Naive thymus-derived CD4-positive, alpha-beta T cell (primary cell): ENCODE measurements at regions of chr2 and their contacts with region 1.

Region 1: GRCh38 chr2:233331536-233331935 is 22.8 kb upstream of the DGKD start:
- DNase-seq: peak; percentile 45 to 89 (median 83)
- ATAC-seq: peak; percentile 96
- H3K4me3 ChIP-seq: peak overlapping the region; percentile 17
- H3K4me3 Mint-ChIP-seq: peak overlapping the region; percentile 65 to 82 (median 73)
- H3K27ac ChIP-seq: peak overlapping the region; percentile 75
- H3K27ac Mint-ChIP-seq: peak overlapping the region; percentile 94 to 99 (median 98)
- H3K4me1 ChIP-seq: peaks cover 46 to 58% of the 10 kb centered on the region in 2 donors
- H3K4me1 Mint-ChIP-seq: peaks cover 33 to 64% (median 51%) of the 10 kb centered on the region in 7 donors
- H3K27me3 ChIP-seq: no peaks in the 10 kb centered on the region
- H3K27me3 Mint-ChIP-seq: peaks cover 0 to 2% (median 0%) of the 10 kb centered on the region in 5 donors

Region 2: DNA sequence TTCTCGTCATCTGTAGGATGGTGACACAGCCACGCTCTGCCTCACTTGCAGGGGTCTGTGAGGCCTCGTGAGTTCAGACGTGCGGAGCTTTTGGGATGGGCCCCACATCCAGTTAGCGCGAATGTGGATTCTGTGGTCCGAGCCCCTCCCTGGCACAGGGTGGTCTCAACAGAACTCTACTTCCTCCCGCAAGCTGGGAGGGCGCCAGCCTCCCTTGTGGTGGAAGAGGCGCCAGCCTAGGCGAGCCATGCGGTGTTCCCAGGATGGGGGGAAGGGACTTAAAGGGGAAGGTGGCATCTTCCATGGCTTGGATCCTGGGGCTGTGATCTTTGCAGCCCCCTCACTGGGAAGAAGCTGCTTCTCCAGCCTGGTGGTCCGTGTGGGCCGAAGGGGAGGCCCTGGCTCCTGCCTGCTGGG is 460.1 kb before region 1 on chr2:
- CTCF ChIA-PET with region 1: no interaction called
- POLR2A ChIA-PET with region 1: no interaction called
- intact Hi-C with region 1: no loop called
- DNase-seq: peak in 1 of 9 donors; percentile 15
- ATAC-seq: no peak
- H3K4me3 ChIP-seq: no peak overlapping the region
- H3K4me3 Mint-ChIP-seq: no peak overlapping the region
- H3K27ac ChIP-seq: no peak overlapping the region
- H3K27ac Mint-ChIP-seq: no peak overlapping the region
- H3K4me1 ChIP-seq: no peaks in the 10 kb centered on the region
- H3K4me1 Mint-ChIP-seq: peaks cover 0 to 10% (median 5%) of the 10 kb centered on the region in 7 donors
- H3K27me3 ChIP-seq: no peaks in the 10 kb centered on the region
- H3K27me3 Mint-ChIP-seq: peaks cover 8 to 19% (median 13%) of the 10 kb centered on the region in 5 donors

Region 3: DNA sequence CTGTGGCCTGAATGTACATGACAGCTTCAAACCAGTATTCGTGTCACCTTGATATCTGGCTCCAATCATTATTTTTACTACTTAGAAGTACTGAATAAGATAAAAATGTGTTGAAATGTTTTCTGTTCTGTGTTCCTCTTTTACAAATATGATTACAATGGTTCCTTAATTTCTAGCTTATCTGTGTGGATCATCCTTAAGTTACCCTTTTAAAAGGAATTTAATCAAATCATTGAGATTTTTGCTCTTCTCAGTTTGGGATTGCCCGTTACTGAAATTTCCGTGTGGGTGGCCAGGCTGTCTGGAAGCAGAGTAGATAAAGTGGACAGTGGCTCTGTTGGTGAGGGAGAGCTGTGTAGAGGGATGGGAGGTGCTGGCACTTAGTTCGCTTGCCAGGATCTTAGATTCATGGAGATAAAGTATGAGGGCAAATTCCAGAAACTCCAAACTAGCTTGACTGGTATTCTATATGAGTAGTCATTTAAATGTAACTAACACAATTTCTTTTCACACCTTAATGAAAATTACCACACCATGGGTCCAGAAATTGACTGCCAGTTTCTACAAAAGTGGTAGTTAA is 51.3 kb before region 1 on chr2:
- CTCF ChIA-PET with region 1: interaction called, 3 read pairs
- POLR2A ChIA-PET with region 1: interaction called, 13 read pairs
- intact Hi-C with region 1: loop called in 1 of 2 experiments (anchors 5 kb)
- DNase-seq: no peak
- ATAC-seq: no peak
- H3K4me3 ChIP-seq: no peak overlapping the region
- H3K4me3 Mint-ChIP-seq: no peak overlapping the region
- H3K27ac ChIP-seq: no peak overlapping the region
- H3K27ac Mint-ChIP-seq: peak overlapping the region in 8 of 9 donors; percentile 20 to 76 (median 70)
- H3K4me1 ChIP-seq: peaks cover 11 to 15% of the 10 kb centered on the region in 2 donors
- H3K4me1 Mint-ChIP-seq: peaks cover 9 to 45% (median 34%) of the 10 kb centered on the region in 7 donors
- H3K27me3 ChIP-seq: no peaks in the 10 kb centered on the region
- H3K27me3 Mint-ChIP-seq: no peaks in the 10 kb centered on the region

Region 4: GRCh38 chr2:233288719-233289118 is 42.8 kb before region 1 on chr2:
- CTCF ChIA-PET with region 1: interaction called, 3 read pairs
- POLR2A ChIA-PET with region 1: interaction called, 4 read pairs
- intact Hi-C with region 1: loop called in 1 of 2 experiments (anchors 5 kb)
- DNase-seq: no peak
- ATAC-seq: no peak
- H3K4me3 ChIP-seq: no peak overlapping the region
- H3K4me3 Mint-ChIP-seq: no peak overlapping the region
- H3K27ac ChIP-seq: peak overlapping the region; percentile 39
- H3K27ac Mint-ChIP-seq: peak overlapping the region in 8 of 9 donors; percentile 23 to 82 (median 69)
- H3K4me1 ChIP-seq: no peaks in the 10 kb centered on the region
- H3K4me1 Mint-ChIP-seq: peaks cover 0 to 22% (median 9%) of the 10 kb centered on the region in 7 donors
- H3K27me3 ChIP-seq: no peaks in the 10 kb centered on the region
- H3K27me3 Mint-ChIP-seq: no peaks in the 10 kb centered on the region

Region 5: GRCh38 chr2:233343171-233343705 is 11.7 kb after region 1 on chr2:
- CTCF ChIA-PET with region 1: interaction called, 3 read pairs
- POLR2A ChIA-PET with region 1: interaction called, 11 read pairs
- intact Hi-C with region 1: no loop called
- DNase-seq: no peak
- ATAC-seq: no peak
- H3K4me3 ChIP-seq: no peak overlapping the region
- H3K4me3 Mint-ChIP-seq: no peak overlapping the region
- H3K27ac ChIP-seq: no peak overlapping the region
- H3K27ac Mint-ChIP-seq: no peak overlapping the region
- H3K4me1 ChIP-seq: no peaks in the 10 kb centered on the region
- H3K4me1 Mint-ChIP-seq: peaks cover 5 to 17% (median 11%) of the 10 kb centered on the region in 7 donors
- H3K27me3 ChIP-seq: no peaks in the 10 kb centered on the region
- H3K27me3 Mint-ChIP-seq: peaks cover 0 to 11% (median 0%) of the 10 kb centered on the region in 5 donors

Region 6: DNA sequence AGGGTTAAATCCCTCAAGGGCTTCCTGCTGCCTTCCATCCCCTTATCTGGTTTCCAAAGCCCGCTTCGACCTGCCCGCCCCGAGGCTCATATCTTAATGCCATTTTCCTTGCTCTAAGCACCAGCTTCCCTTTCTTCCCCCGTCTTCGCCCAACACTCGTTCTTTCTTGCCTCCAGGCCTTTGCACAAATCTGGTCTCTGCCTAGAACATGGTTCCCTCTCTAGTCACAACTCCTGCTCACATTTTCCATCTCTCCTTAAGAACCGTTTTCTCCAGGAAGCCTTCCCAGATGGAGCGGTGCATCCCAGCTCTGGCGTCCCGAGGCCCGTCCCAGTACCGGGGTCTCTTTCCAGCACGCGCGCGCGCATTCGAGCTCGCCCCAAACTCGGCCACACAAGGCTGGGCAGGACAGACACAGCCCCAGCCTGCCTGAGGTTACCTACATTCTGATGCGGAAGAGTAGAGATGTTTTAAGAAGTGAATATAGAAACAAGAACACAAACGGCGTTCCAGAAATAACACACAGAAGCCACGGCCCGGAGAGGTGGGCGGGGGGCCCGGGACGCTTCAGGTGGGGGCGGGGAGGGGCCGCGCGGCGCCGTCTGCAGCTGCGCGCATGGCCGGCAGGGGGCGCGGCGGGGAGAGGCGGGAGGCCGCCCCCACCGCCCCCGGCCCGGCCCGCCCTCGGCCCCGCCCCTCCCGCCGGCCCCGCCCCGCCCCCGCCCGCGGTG is 22.4 kb after region 1 on chr2 and contains the start of gene DGKD:
- CTCF ChIA-PET with region 1: interaction called, 4 read pairs
- POLR2A ChIA-PET with region 1: interaction called, 13 read pairs
- intact Hi-C with region 1: loop called (anchors 1 kb)
- DNase-seq: peak; percentile 42 to 81 (median 69)
- ATAC-seq: peak; percentile 96
- H3K4me3 ChIP-seq: peak within 1 kb of the TSS; percentile 83
- H3K4me3 Mint-ChIP-seq: peak within 1 kb of the TSS; percentile 92 to 98 (median 94)
- H3K27ac ChIP-seq: peak within 1 kb of the TSS; percentile 72
- H3K27ac Mint-ChIP-seq: peak within 1 kb of the TSS; percentile 86 to 96 (median 92)
- H3K4me1 ChIP-seq: peaks cover 36 to 42% of the 10 kb centered on the region in 2 donors
- H3K4me1 Mint-ChIP-seq: peaks cover 57 to 74% (median 67%) of the 10 kb centered on the region in 7 donors
- H3K27me3 ChIP-seq: no peaks in the 10 kb centered on the region
- H3K27me3 Mint-ChIP-seq: no peaks in the 10 kb centered on the region
- total RNA-seq, gene DGKD: 61.6 to 252 (median 213) TPM